GM13977 (cell line): ENCODE measurements at regions of chr3 and their contacts with region 1.

Region 1: DNA sequence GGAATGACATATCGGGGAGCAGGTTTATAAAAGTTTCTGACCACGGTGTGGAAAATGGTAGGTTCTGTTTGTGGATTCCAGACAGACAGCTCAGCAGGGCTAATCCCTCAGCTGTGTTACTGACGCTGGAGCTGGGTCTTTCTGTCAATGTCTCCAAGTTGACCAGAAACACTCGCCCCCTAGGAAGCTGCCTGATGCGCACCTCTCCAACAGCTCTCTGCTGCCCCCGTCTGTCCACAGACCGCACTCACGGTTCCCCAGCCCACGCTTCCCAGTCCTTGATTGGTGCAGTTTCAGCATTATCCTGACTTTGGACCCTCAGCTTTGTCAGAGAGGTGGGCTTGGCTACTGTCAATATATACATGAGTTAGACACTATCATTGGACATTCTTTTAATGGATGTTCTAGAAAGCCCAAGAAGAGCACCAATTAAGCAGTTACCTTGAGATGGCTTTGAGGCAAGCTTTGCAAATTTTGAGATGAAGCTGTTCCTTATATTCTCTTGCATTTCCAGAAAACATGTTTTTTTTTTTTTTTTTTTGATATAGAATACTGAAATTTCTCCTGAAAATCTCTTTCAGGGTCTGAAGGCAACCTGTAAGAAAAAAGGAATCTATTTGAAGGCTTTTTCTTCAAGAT is 98.9 kb upstream of the TBC1D5 start:
- DNase-seq: peak; percentile 55
- CTCF ChIP-seq: peak; percentile 97

Region 2: DNA sequence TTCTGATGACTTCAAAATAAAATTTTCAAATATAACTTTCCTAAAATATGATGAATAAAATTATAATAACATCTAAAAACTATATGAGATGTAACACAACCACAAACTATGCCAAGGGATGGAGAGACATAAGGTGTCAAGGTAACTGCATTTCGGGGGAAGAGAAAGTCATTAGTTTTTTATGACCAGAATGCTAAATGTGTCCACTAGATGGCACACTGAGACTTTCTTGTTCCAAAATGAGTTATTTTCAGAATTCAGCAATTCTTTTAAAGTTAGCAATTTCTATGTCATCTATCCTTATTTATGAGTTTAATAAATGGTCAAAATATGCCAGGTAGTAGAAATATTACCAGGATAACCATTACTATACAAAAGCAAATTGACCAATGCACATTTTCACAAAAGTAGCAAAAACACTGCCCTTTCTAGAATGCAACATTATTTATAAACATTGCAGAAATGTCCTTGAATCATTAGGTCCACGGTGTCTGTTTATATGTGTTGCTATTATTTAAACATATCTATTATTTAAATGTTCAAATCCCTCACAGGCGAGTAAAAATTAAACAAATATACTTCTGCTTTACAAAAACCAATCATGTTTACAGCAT is 582.4 kb before region 1 on chr3:
- in situ Hi-C with region 1: loop called (anchors 25 kb)
- DNase-seq: peak; percentile 52
- CTCF ChIP-seq: peak; percentile 64